GM18951 (cell line): ENCODE measurements at regions of chr2 and their contacts with region 1.

Region 1: DNA sequence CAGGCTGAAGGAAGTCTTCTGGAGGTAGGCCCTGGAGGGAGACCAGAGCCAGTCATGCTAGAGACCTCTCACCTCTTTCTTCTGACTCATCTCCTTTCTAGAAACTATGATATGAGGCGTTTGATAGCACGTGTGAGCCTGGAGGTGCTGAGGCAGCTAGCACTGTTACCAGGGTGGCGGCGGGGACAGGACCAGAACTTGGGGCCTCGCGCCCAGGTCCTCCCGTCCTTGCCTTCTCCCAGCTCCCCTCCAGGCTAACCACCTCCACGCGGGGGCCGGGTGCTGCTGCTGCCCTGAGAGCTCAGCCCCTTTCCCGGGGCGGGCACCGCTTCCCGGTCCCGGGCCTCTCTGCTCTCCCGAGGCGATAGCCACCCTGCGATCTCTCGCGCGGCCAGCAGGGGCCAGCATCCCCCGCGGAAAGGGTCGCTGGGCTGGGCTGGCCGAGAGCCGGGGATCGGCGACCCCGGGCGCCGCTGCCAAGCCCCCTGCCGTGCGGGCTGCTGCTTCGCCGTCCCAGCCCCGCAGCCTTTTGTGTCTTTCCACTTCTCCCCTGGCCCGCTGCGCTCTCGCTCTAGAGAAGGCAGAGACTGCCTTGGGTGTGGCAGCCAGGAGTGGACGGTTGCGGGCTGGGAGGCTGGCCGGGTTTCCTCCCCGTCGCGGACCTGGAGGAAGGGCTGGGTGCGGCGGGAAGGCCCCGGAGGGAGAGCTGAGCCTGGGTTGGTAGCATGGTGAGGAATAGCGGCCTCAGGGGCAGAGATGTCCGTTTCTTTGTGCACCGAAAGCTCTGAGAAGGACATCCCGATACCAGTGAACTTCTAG is 49.1 kb downstream of the TMEM17 start:
- POLR2A ChIP-seq: no peak

Region 2: DNA sequence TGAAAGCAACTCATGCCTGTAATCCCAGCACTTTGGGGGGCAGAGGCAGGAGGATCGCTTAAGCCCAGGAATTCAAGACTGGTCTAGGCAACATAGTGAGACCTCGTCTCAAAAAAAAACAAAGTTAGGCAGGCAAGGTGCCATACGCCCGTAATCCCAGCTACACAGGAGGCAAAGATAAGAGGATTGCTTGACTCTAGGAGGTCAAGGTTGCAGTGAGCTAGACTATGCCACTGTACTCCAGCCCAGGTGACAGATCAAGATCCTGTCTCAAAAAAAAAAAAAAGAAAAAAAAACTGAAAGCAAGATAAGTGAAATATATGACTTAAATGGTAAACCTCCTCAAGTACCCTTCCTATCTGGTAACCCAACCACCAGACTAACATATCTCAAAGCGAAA is 1045.8 kb before region 1 on chr2:
- in situ Hi-C with region 1: no loop called
- POLR2A ChIP-seq: no peak

Region 3: DNA sequence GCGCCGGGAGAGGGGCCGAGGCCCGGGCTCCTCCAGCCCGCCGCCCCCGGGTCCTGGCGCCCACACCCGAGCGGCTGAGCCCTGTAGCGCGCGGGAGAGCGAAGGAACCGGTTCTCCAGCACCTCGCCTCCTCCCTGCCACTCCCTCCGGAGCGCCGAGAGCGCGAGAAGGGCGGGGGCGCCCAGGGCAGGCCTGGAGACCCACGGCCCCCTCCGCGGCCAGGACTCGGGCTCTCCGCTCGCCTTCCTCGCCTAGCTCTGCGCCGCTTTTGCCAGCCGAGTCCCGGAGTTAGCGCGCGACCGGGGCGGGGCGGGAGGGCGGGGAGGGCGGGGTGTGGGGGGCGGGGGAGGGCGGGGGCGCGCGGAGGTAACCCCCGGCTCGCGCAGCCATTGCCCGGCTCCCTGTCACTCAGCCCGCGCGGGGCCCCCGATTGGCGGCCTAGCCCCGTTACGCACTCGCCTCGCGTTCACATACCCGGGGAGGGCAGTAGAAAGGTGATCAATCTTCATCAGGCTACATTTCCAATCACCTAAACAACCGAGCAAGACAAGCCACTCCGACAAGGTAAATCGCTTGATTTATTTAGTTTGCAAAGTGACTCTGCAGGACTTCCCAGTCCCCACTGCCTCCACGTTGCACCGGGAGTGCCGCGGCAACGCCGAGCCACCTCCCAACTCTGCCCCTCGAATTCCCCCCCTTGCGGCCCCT is 593.6 kb after region 1 on chr2 and contains the start of gene OTX1:
- in situ Hi-C with region 1: loop called (anchors 25 kb)
- POLR2A ChIP-seq: peak; percentile 52